Testis (tissue), 5 donors: ENCODE measurements at regions of chr2 and their contacts with region 1.

Region 1: GRCh38 chr2:112048887-112049286 is 6.2 kb upstream of the TMEM87B start:
- DNase-seq: peak; percentile 48
- H3K4me3 ChIP-seq: no peak overlapping the region
- H3K27ac ChIP-seq: no peak overlapping the region
- H3K4me1 ChIP-seq: peaks cover 15% of the 10 kb centered on the region
- H3K27me3 ChIP-seq: no peaks in the 10 kb centered on the region
- CTCF ChIP-seq: peak; percentile 78 to 93 (median 84)
- POLR2A ChIP-seq: no peak

Region 2: GRCh38 chr2:111897924-111898702 is 150.8 kb before region 1 on chr2 and contains the start of gene MERTK:
- intact Hi-C with region 1: loop called (anchors 5 kb)
- DNase-seq: peak; percentile 91
- H3K4me3 ChIP-seq: peak within 1 kb of the TSS; percentile 89 to 97
- H3K27ac ChIP-seq: peak within 1 kb of the TSS; percentile 90 to 93
- H3K4me1 ChIP-seq: peaks cover 30% of the 10 kb centered on the region
- H3K27me3 ChIP-seq: no peaks in the 10 kb centered on the region
- CTCF ChIP-seq: peak; percentile 41 to 53 (median 52)
- POLR2A ChIP-seq: no peak
- total RNA-seq, gene MERTK: 73.8 to 74.2 TPM

Region 3: GRCh38 chr2:111918383-111918806 is 130.5 kb before region 1 on chr2:
- intact Hi-C with region 1: no loop called
- DNase-seq: no peak
- H3K4me3 ChIP-seq: no peak overlapping the region
- H3K27ac ChIP-seq: no peak overlapping the region
- H3K4me1 ChIP-seq: peaks cover 12% of the 10 kb centered on the region
- H3K27me3 ChIP-seq: no peaks in the 10 kb centered on the region
- CTCF ChIP-seq: no peak
- POLR2A ChIP-seq: no peak

Region 4: DNA sequence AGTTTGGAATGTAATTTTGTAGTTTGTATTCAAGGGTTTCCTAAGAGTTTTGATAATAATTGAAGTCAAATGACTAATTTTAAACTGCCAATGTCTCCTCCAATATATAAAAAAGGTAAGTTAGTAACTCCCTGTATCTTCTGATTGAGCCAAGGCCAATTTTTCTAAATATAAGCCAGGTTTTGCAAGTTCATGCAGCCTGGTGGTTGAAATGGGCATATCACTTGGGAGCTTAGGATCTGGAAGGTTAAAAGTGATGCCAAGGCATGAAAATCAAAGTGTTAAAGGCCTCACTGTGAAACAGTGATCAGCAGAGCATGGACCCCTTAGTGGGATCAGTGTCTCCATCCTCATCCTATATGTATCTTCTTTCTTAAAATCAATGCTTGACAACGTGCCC is 90.0 kb before region 1 on chr2:
- intact Hi-C with region 1: no loop called
- DNase-seq: no peak
- H3K4me3 ChIP-seq: no peak overlapping the region
- H3K27ac ChIP-seq: peak overlapping the region; percentile 69 to 79
- H3K4me1 ChIP-seq: peaks cover 52% of the 10 kb centered on the region
- H3K27me3 ChIP-seq: no peaks in the 10 kb centered on the region
- CTCF ChIP-seq: peak; percentile 21 to 44 (median 25)
- POLR2A ChIP-seq: no peak